Prostate gland (tissue), 2 donors: ENCODE measurements at regions of chr13 and their contacts with region 1.

Region 1: DNA sequence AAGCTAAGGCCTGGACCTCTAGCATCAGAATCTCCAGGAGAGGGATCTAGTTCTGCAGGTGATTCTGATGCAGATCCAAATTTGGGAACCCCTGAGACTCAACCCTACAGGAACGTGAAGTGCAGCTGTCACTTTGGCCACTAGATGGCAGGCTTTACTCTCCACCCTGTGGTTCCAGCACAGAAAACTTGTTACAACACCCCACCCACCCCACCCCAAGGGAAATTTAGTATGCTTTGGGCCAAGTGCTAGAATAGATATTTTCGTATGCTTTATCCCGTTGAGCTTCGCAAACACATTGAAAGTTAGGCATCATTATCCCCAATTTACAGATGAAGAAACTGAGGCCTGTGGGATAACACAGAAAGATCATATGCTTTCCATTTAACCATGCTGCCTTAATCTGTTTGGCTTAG is 232.0 kb downstream of the B3GLCT start:
- DNase-seq: peak; percentile 9
- H3K4me3 ChIP-seq: no peak overlapping the region
- H3K27ac ChIP-seq: no peak overlapping the region
- H3K4me1 ChIP-seq: no peaks in the 10 kb centered on the region
- H3K27me3 ChIP-seq: no peaks in the 10 kb centered on the region
- CTCF ChIP-seq: peak; percentile 35 to 75 (median 50)
- POLR2A ChIP-seq: no peak

Region 2: GRCh38 chr13:31742097-31742734 is 310.5 kb after region 1 on chr13:
- intact Hi-C with region 1: loop called (anchors 5 kb)
- DNase-seq: peak; percentile 23
- H3K4me3 ChIP-seq: no peak overlapping the region
- H3K27ac ChIP-seq: no peak overlapping the region
- H3K4me1 ChIP-seq: no peaks in the 10 kb centered on the region
- H3K27me3 ChIP-seq: no peaks in the 10 kb centered on the region
- CTCF ChIP-seq: peak; percentile 76 to 94 (median 82)
- POLR2A ChIP-seq: no peak

Region 3: DNA sequence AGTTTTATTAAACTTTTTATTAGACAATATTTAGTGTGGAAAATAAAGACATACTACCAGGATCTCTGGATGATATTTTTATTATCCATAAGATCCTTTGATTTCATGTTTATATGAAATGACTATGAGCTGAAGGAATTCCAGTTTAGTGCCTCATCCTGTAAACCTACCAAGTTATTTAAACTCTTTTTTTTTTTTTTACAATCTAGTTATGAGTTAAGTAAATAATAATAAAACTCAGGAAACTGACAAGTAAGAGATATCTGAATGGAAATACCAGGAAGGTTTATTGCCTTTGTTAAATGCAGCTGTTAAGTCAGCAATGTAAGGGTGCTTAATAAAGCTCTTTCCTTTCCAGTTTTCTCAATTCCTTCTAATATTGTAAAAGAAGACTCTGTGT is 361.5 kb after region 1 on chr13:
- intact Hi-C with region 1: loop called (anchors 5 kb)
- DNase-seq: no peak
- H3K4me3 ChIP-seq: no peak overlapping the region
- H3K27ac ChIP-seq: no peak overlapping the region
- H3K4me1 ChIP-seq: no peaks in the 10 kb centered on the region
- H3K27me3 ChIP-seq: no peaks in the 10 kb centered on the region
- CTCF ChIP-seq: no peak
- POLR2A ChIP-seq: no peak